Motor neuron (in vitro differentiated cells): ENCODE measurements at regions of chr1 and their contacts with region 1.

Region 1: GRCh38 chr1:112809253-112809684 is 94.1 kb upstream of the PPM1J start:
- ATAC-seq: peak; percentile 89 to 98 (median 95)
- H3K4me3 ChIP-seq: no peak overlapping the region
- H3K27ac ChIP-seq: no peak overlapping the region
- H3K4me1 ChIP-seq: peaks cover 11 to 14% of the 10 kb centered on the region in 2 donors

Region 2: DNA sequence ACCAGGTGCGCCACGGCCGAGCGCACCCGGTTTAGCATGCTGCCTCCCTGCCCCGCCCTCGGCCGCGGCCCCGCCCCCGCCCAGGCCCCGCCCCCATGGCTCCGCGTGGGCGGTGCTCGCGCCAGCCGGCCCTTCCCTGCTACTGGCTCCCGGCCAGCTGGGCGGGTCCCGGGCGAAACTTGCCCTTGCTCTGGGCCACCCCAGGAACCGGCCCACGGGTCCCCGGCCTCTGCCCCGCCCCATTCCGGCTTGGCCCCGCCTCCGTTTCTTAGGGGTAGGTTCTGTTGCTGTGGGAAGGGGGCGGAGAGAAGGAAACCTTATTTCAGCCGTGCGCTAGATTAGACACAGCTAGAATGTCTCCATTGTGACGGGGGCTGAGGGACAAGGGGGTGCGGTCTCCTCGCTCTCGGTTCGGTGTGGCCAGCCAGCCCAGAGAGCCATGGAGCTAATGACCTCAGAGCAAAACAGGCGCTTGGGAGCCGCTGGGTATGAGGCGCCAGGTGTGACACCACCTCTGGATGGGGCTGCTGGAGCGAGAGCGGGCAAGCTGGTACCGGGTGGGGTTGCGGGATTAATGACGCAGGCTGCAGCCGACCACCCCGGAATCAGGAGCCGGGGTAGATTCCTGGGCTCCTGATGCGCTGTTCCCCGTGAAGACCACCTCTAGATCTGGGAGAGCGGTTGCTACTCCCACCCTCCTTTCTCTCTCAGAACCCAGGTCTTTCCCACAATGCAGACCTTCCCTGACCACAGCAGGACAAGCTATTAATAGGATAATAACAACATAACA is 93.8 kb before region 1 on chr1 and contains the start of gene PPM1J:
- in situ Hi-C with region 1: loop called in 4 of 9 experiments (anchors 5 to 10 kb)
- ATAC-seq: peak; percentile 72 to 90 (median 82)
- H3K4me3 ChIP-seq: peak within 1 kb of the TSS; percentile 42 to 54 (median 48)
- H3K27ac ChIP-seq: no peak within 1 kb of the TSS
- H3K4me1 ChIP-seq: peaks cover 0 to 5% of the 10 kb centered on the region in 2 donors
- total RNA-seq, gene PPM1J: 0.36 to 2.2 (median 0.87) TPM